CD4-positive, alpha-beta memory T cell (primary cell): ENCODE measurements at regions of chr1 and their contacts with region 1.

Region 1: GRCh38 chr1:203038891-203039608 is 12.8 kb downstream of the PPFIA4 start:
- DNase-seq: peak; percentile 50 to 55 (median 54)
- H3K4me3 ChIP-seq: no peak overlapping the region
- H3K4me3 Mint-ChIP-seq: no peak overlapping the region
- H3K27ac ChIP-seq: no peak overlapping the region
- H3K27ac Mint-ChIP-seq: no peak overlapping the region
- H3K4me1 ChIP-seq: no peaks in the 10 kb centered on the region
- H3K4me1 Mint-ChIP-seq: peaks cover 2 to 6% (median 4%) of the 10 kb centered on the region in 4 donors
- H3K27me3 ChIP-seq: no peaks in the 10 kb centered on the region
- H3K27me3 Mint-ChIP-seq: peaks cover 3 to 8% of the 10 kb centered on the region in 2 donors

Region 2: DNA sequence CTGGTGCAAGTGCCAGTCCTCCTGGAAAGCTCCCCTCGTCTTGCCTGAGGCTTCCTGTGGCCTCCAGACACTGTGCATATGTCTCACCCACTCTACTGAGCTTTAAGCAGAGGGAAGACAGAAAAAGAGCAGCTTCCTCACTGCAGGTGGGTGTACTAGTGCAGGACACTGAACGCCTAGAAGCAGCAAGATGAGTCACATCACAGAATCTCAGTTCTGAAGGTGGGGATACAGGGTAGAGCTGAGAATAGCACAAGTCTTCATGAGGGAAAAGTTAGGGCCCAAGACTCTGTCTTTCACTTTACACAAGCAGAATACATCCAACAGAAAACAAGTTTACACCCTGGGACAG is 190.9 kb before region 1 on chr1:
- CTCF ChIA-PET with region 1: no interaction called
- POLR2A ChIA-PET with region 1: no interaction called
- intact Hi-C with region 1: no loop called
- DNase-seq: no peak
- H3K4me3 ChIP-seq: no peak overlapping the region
- H3K4me3 Mint-ChIP-seq: no peak overlapping the region
- H3K27ac ChIP-seq: no peak overlapping the region
- H3K27ac Mint-ChIP-seq: peak overlapping the region in 1 of 7 donors; percentile 44
- H3K4me1 ChIP-seq: no peaks in the 10 kb centered on the region
- H3K4me1 Mint-ChIP-seq: no peaks in the 10 kb centered on the region
- H3K27me3 ChIP-seq: no peaks in the 10 kb centered on the region
- H3K27me3 Mint-ChIP-seq: peaks cover 0 to 1% of the 10 kb centered on the region in 2 donors

Region 3: GRCh38 chr1:203026031-203026989 is 12.7 kb before region 1 on chr1 and contains the start of gene PPFIA4:
- CTCF ChIA-PET with region 1: interaction called, 14 read pairs
- POLR2A ChIA-PET with region 1: interaction called, 3 read pairs
- intact Hi-C with region 1: no loop called
- DNase-seq: peak; percentile 76 to 90 (median 85)
- H3K4me3 ChIP-seq: peak within 1 kb of the TSS; percentile 60 to 81
- H3K4me3 Mint-ChIP-seq: peak within 1 kb of the TSS; percentile 79 to 86 (median 81)
- H3K27ac ChIP-seq: peak within 1 kb of the TSS; percentile 46
- H3K27ac Mint-ChIP-seq: peak within 1 kb of the TSS; percentile 65 to 90 (median 80)
- H3K4me1 ChIP-seq: peaks cover 13% of the 10 kb centered on the region
- H3K4me1 Mint-ChIP-seq: peaks cover 4 to 16% (median 11%) of the 10 kb centered on the region in 4 donors
- H3K27me3 ChIP-seq: no peaks in the 10 kb centered on the region
- H3K27me3 Mint-ChIP-seq: peaks cover 0 to 2% of the 10 kb centered on the region in 2 donors
- total RNA-seq, gene PPFIA4: 1.4 to 1.5 TPM

Region 4: GRCh38 chr1:203057911-203058675 is 19.0 kb after region 1 on chr1:
- CTCF ChIA-PET with region 1: interaction called, 18 read pairs
- POLR2A ChIA-PET with region 1: no interaction called
- intact Hi-C with region 1: no loop called
- DNase-seq: no peak
- H3K4me3 ChIP-seq: no peak overlapping the region
- H3K4me3 Mint-ChIP-seq: no peak overlapping the region
- H3K27ac ChIP-seq: no peak overlapping the region
- H3K27ac Mint-ChIP-seq: peak overlapping the region in 1 of 7 donors; percentile 17
- H3K4me1 ChIP-seq: no peaks in the 10 kb centered on the region
- H3K4me1 Mint-ChIP-seq: no peaks in the 10 kb centered on the region
- H3K27me3 ChIP-seq: no peaks in the 10 kb centered on the region
- H3K27me3 Mint-ChIP-seq: peaks cover 11 to 12% of the 10 kb centered on the region in 2 donors

Region 5: GRCh38 chr1:203063287-203063686 is 24.2 kb after region 1 on chr1:
- CTCF ChIA-PET with region 1: interaction called, 18 read pairs
- POLR2A ChIA-PET with region 1: no interaction called
- intact Hi-C with region 1: no loop called
- DNase-seq: no peak
- H3K4me3 ChIP-seq: no peak overlapping the region
- H3K4me3 Mint-ChIP-seq: no peak overlapping the region
- H3K27ac ChIP-seq: no peak overlapping the region
- H3K27ac Mint-ChIP-seq: no peak overlapping the region
- H3K4me1 ChIP-seq: no peaks in the 10 kb centered on the region
- H3K4me1 Mint-ChIP-seq: no peaks in the 10 kb centered on the region
- H3K27me3 ChIP-seq: no peaks in the 10 kb centered on the region
- H3K27me3 Mint-ChIP-seq: peaks cover 5 to 8% of the 10 kb centered on the region in 2 donors

Region 6: GRCh38 chr1:203172128-203173010 is 133.3 kb after region 1 on chr1:
- CTCF ChIA-PET with region 1: interaction called, 20 read pairs
- POLR2A ChIA-PET with region 1: no interaction called
- intact Hi-C with region 1: loop called (anchors 1 kb)
- DNase-seq: peak in 4 of 5 donors; percentile 22 to 34 (median 29)
- H3K4me3 ChIP-seq: no peak overlapping the region
- H3K4me3 Mint-ChIP-seq: no peak overlapping the region
- H3K27ac ChIP-seq: no peak overlapping the region
- H3K27ac Mint-ChIP-seq: no peak overlapping the region
- H3K4me1 ChIP-seq: no peaks in the 10 kb centered on the region
- H3K4me1 Mint-ChIP-seq: no peaks in the 10 kb centered on the region
- H3K27me3 ChIP-seq: no peaks in the 10 kb centered on the region
- H3K27me3 Mint-ChIP-seq: peaks cover 2 to 8% of the 10 kb centered on the region in 2 donors

Region 7: GRCh38 chr1:203216274-203217138 is 177.5 kb after region 1 on chr1:
- CTCF ChIA-PET with region 1: interaction called, 89 read pairs
- POLR2A ChIA-PET with region 1: no interaction called
- intact Hi-C with region 1: no loop called
- DNase-seq: peak; percentile 48 to 56 (median 50)
- H3K4me3 ChIP-seq: no peak overlapping the region
- H3K4me3 Mint-ChIP-seq: peak overlapping the region in 1 of 8 donors; percentile 18
- H3K27ac ChIP-seq: no peak overlapping the region
- H3K27ac Mint-ChIP-seq: peak overlapping the region in 2 of 7 donors; percentile 54 to 60
- H3K4me1 ChIP-seq: no peaks in the 10 kb centered on the region
- H3K4me1 Mint-ChIP-seq: peaks cover 0 to 9% (median 5%) of the 10 kb centered on the region in 4 donors
- H3K27me3 ChIP-seq: no peaks in the 10 kb centered on the region
- H3K27me3 Mint-ChIP-seq: peaks cover 8 to 10% of the 10 kb centered on the region in 2 donors